Ovary (tissue), 10 donors: ENCODE measurements at regions of chr9 and their contacts with region 1.

Region 1: GRCh38 chr9:33623658-33624586 is 99.9 kb downstream of the ANKRD18B start:
- DNase-seq: peak; percentile 18 to 62 (median 42)
- H3K4me3 ChIP-seq: no peak overlapping the region
- H3K27ac ChIP-seq: no peak overlapping the region
- H3K4me1 ChIP-seq: no peaks in the 10 kb centered on the region
- H3K27me3 ChIP-seq: no peaks in the 10 kb centered on the region
- CTCF ChIP-seq: peak; percentile 19 to 71 (median 60)
- EP300 ChIP-seq: no peak
- POLR2A ChIP-seq: no peak

Region 2: GRCh38 chr9:33489066-33489465 is 134.9 kb before region 1 on chr9:
- intact Hi-C with region 1: no loop called
- DNase-seq: no peak
- H3K4me3 ChIP-seq: no peak overlapping the region
- H3K27ac ChIP-seq: no peak overlapping the region
- H3K4me1 ChIP-seq: no peaks in the 10 kb centered on the region
- H3K27me3 ChIP-seq: no peaks in the 10 kb centered on the region
- CTCF ChIP-seq: no peak
- EP300 ChIP-seq: no peak
- POLR2A ChIP-seq: no peak

Region 3: DNA sequence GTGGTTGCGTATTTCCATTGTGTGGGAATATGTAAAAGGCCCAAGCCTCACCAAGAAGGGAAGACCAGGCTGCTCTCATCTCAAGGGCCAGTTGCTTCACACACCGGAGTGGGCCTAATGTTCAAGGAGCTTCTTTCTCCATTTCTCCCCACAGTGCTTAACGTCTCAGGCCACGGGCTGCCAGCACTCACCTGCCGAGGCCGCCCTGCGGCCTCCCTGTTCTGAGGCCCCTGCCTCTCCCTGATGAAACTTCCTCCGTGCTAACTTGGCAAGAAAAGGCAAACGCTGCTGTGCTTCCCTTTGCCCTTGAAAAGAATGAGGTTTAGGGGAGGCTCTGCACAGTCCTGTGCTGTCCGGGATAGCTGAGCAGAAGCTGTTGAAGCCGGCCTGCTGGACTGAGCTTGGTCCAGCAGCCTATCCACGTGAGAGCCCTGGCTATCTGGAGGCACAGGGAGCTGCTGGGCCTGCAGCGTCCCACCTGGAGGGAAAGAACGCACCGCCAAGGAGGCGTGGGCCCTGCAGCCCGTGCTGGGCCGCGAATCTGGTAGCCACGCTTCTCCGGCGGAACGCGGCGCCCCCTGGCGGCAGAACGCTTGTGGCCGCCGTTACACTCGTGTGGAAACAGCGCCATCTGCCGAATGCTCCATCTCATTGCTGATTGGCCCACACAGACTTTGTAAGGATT is 97.9 kb after region 1 on chr9:
- intact Hi-C with region 1: loop called in 3 of 4 experiments (anchors 2 to 5 kb)
- DNase-seq: peak; percentile 77 to 93 (median 86)
- H3K4me3 ChIP-seq: no peak overlapping the region
- H3K27ac ChIP-seq: no peak overlapping the region
- H3K4me1 ChIP-seq: peaks cover 4% of the 10 kb centered on the region
- H3K27me3 ChIP-seq: no peaks in the 10 kb centered on the region
- CTCF ChIP-seq: peak; percentile 92 to 97 (median 93)
- EP300 ChIP-seq: no peak
- POLR2A ChIP-seq: no peak

Region 4: DNA sequence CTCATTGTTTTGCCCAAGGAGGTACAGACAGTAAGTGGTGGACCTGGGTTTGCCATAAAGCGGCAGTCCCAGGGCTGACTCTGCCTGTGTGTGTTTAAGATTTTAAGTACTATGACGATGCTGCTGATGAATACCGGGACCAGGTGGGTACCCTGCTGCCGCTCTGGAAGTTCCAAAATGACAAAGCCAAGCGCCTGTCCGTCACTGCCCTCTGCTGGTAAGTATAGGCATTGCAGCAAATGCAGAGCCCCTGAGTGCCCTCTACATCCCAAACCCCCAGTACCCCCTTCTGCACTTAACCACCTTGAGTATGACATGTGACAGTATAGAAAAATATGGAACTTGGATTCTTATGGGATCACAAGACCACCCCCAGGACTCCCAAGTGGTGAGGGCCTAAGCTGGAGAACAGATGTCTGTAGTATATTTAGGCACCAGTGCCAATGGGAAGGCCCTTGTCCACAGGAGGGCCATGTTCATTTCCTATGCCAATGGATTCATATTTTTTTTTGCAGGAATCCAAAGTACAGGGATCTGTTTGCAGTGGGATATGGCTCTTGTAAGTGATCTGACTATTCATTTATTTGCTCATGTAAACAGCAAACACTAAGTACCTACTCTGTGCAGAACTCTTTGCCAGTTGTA is 876.8 kb after region 1 on chr9:
- intact Hi-C with region 1: loop called in 1 of 4 experiments (anchors 10 kb)
- DNase-seq: peak; percentile 32 to 68 (median 64)
- H3K4me3 ChIP-seq: no peak overlapping the region
- H3K27ac ChIP-seq: no peak overlapping the region
- H3K4me1 ChIP-seq: peaks cover 5% of the 10 kb centered on the region
- H3K27me3 ChIP-seq: no peaks in the 10 kb centered on the region
- CTCF ChIP-seq: peak; percentile 72 to 81 (median 80)
- EP300 ChIP-seq: no peak
- POLR2A ChIP-seq: no peak